Endothelial cell of umbilical vein (primary cell): ENCODE measurements at regions of chr4 and their contacts with region 1.

Region 1: GRCh38 chr4:158768555-158769174 is at the start of gene FNIP2:
- DNase-seq: peak; percentile 80
- H3K4me3 ChIP-seq: peak within 1 kb of the TSS; percentile 59 to 80 (median 75)
- H3K27ac ChIP-seq: peak within 1 kb of the TSS; percentile 68
- H3K4me1 ChIP-seq: peaks cover 31% of the 10 kb centered on the region
- H3K27me3 ChIP-seq: no peaks in the 10 kb centered on the region
- CTCF ChIP-seq: no peak
- POLR2A ChIP-seq: peak; percentile 53
- total RNA-seq, gene FNIP2: 13.6 and 14.4 TPM in 2 replicates

Region 2: DNA sequence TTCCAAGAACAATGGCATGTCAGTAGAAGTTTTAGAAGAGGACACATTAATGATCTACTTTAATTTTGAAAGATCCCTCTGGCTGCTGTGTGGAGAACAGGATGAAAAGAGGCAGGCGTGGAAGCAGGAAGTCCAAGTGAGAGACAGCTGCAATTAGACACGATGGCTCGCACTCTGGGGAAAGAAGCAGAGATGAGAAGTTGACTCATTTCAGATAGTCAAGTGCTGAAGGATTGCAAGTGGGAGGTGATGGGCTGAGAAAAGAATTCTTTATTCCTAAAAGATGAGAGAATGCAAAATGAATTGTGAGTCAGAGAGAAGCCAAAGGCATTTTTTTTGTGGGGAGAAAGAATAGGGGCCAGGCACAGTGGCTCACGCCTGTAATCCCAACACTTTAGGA is 230.5 kb before region 1 on chr4:
- CTCF ChIA-PET with region 1: no interaction called
- POLR2A ChIA-PET with region 1: no interaction called
- dilution Hi-C with region 1: no loop called
- intact Hi-C with region 1: no loop called
- DNase-seq: no peak
- H3K4me3 ChIP-seq: no peak overlapping the region
- H3K27ac ChIP-seq: no peak overlapping the region
- H3K4me1 ChIP-seq: peaks cover 15% of the 10 kb centered on the region
- H3K27me3 ChIP-seq: no peaks in the 10 kb centered on the region
- CTCF ChIP-seq: no peak
- POLR2A ChIP-seq: no peak

Region 3: DNA sequence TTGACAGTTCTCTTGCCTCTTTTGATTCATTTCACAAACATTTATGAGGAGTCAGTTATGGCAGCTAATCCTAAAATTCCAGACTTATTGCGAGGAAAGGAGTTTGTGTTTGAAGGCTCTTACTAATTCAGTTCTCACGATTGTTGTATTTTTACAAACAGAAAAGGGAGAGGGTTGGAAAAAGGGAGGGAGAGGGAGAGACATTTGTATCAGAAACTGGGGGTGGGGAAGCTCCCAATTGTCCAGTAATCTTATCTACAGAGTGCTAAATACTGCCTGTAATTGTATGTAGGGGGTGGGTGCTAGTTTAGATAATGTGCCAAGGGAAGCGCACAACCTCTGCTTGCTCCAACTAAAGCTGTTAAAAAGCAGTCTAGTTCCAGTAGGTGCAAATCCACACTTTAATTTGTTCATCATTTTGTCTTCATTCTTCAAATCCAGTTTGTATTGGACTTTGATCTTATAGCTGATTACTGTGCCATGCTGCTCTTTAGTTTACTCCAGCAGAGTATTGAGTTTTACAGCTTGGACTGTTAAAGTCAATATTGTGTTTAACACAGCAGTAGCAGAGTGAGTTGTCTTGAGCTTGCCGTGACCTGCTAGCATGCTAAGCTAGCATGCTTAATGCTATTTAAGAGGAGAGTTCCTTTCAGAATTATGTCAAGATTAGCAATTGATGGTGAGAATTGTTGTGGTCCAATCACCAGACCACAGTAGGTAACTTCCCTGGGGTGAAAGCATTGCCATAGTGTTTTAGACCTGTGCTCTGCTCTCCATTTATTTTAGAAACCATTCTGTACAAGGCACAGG is 14.1 kb after region 1 on chr4:
- CTCF ChIA-PET with region 1: interaction called, 5 read pairs
- POLR2A ChIA-PET with region 1: no interaction called
- dilution Hi-C with region 1: no loop called
- intact Hi-C with region 1: loop called (anchors 1 kb)
- DNase-seq: peak; percentile 54
- H3K4me3 ChIP-seq: no peak overlapping the region
- H3K27ac ChIP-seq: peak overlapping the region; percentile 51
- H3K4me1 ChIP-seq: peaks cover 39% of the 10 kb centered on the region
- H3K27me3 ChIP-seq: no peaks in the 10 kb centered on the region
- CTCF ChIP-seq: no peak
- POLR2A ChIP-seq: no peak

Region 4: DNA sequence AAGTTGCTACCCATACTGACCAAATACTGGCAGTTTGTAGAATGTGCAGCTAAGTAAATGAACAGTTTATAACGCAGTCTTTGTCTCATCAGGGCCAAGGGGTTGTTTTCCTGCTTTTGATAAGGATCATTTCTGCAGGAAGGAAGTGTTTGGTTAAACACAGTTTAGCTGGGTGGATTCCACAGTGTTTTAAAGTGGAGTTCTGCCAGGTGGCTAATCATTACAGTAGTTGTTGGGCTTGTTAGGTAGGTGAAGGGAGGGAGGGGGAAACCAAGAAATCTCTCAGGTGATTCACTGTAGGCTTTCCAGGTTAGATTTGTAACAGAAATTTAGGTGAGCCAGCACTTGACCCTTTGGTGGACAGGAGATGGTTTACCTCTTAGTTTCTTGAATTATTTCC is 58.2 kb after region 1 on chr4:
- CTCF ChIA-PET with region 1: no interaction called
- POLR2A ChIA-PET with region 1: no interaction called
- dilution Hi-C with region 1: no loop called
- intact Hi-C with region 1: loop called (anchors 1 kb)
- DNase-seq: peak; percentile 68
- H3K4me3 ChIP-seq: no peak overlapping the region
- H3K27ac ChIP-seq: no peak overlapping the region
- H3K4me1 ChIP-seq: peaks cover 41% of the 10 kb centered on the region
- H3K27me3 ChIP-seq: no peaks in the 10 kb centered on the region
- CTCF ChIP-seq: no peak
- POLR2A ChIP-seq: no peak